ENCODE measurements at regions of chr7 and their contacts with region 1.

Region 1: GRCh38 chr7:139035586-139036353 is at the start of gene ZC3HAV1L:
- DNase-seq: peak; percentile 88
- total RNA-seq, gene ZC3HAV1L: 9.2 to 10.9 TPM

Region 2: GRCh38 chr7:139075031-139075652 is 39.4 kb after region 1 on chr7:
- intact Hi-C with region 1: loop called in 1 of 2 experiments (anchors 5 kb)
- DNase-seq: peak; percentile 83